Dendritic cell treated with granulocyte-macrophage colony-stimulating factor and Interleukin-4, amounts not matched to agents 40 ng/mL and 50 ng/mL, for 4 days (primary cell): ENCODE measurements at regions of chr17 and their contacts with region 1.

Region 1: GRCh38 chr17:27332485-27333409 is 38.8 kb downstream of the WSB1 start:
- H3K4me3 Mint-ChIP-seq: peak overlapping the region; percentile 73
- H3K27ac Mint-ChIP-seq: peak overlapping the region; percentile 92
- H3K4me1 Mint-ChIP-seq: peaks cover 61% of the 10 kb centered on the region
- H3K27me3 Mint-ChIP-seq: no peaks in the 10 kb centered on the region

Region 2: DNA sequence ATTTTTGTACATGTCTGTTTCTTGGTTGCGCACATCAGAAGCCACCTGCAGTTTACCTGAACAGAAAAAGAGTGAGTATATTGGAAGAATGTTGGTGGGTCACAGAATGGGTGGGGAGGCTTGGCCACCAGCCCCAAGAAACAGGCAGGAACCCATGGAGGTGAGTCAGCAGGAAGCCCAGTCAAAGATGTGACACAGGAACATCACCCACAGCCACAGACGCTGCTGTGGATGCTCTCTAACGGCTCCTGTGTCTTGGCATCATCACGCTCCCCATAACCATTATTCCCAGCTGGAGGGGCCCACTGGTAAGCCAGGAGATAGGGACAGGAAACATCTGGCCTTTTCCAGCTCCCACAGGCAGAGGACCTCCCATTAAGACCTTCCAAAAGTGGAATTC is 132.8 kb before region 1 on chr17:
- intact Hi-C with region 1: loop called (anchors 2 kb)
- H3K4me3 Mint-ChIP-seq: no peak overlapping the region
- H3K27ac Mint-ChIP-seq: no peak overlapping the region
- H3K4me1 Mint-ChIP-seq: peaks cover 15% of the 10 kb centered on the region
- H3K27me3 Mint-ChIP-seq: no peaks in the 10 kb centered on the region

Region 3: GRCh38 chr17:27245230-27245696 is 87.5 kb before region 1 on chr17:
- intact Hi-C with region 1: loop called (anchors 2 kb)
- H3K4me3 Mint-ChIP-seq: peak overlapping the region; percentile 70
- H3K27ac Mint-ChIP-seq: peak overlapping the region; percentile 96
- H3K4me1 Mint-ChIP-seq: peaks cover 65% of the 10 kb centered on the region
- H3K27me3 Mint-ChIP-seq: no peaks in the 10 kb centered on the region

Region 4: GRCh38 chr17:27306276-27306835 is 26.4 kb before region 1 on chr17:
- intact Hi-C with region 1: no loop called
- H3K4me3 Mint-ChIP-seq: no peak overlapping the region
- H3K27ac Mint-ChIP-seq: no peak overlapping the region
- H3K4me1 Mint-ChIP-seq: peaks cover 17% of the 10 kb centered on the region
- H3K27me3 Mint-ChIP-seq: no peaks in the 10 kb centered on the region

Region 5: GRCh38 chr17:27407916-27408846 is 75.4 kb after region 1 on chr17:
- intact Hi-C with region 1: no loop called
- H3K4me3 Mint-ChIP-seq: no peak overlapping the region
- H3K27ac Mint-ChIP-seq: no peak overlapping the region
- H3K4me1 Mint-ChIP-seq: peaks cover 26% of the 10 kb centered on the region
- H3K27me3 Mint-ChIP-seq: peaks cover 6% of the 10 kb centered on the region

Region 6: GRCh38 chr17:27666831-27667560 is 334.2 kb after region 1 on chr17:
- intact Hi-C with region 1: no loop called
- H3K4me3 Mint-ChIP-seq: no peak overlapping the region
- H3K27ac Mint-ChIP-seq: no peak overlapping the region
- H3K4me1 Mint-ChIP-seq: no peaks in the 10 kb centered on the region
- H3K27me3 Mint-ChIP-seq: no peaks in the 10 kb centered on the region